Heart right ventricle (tissue), 16 donors: ENCODE measurements at regions of chr2 and their contacts with region 1.

Region 1: GRCh38 chr2:197889041-197889440 is 84.6 kb downstream of the PLCL1 start:
- DNase-seq: no peak
- ATAC-seq: peak in 2 of 8 donors; percentile 52 to 67
- H3K4me3 ChIP-seq: no peak overlapping the region
- H3K27ac ChIP-seq: peak overlapping the region in 7 of 10 donors; percentile 3 to 60 (median 29)
- H3K4me1 ChIP-seq: peaks cover 0 to 62% (median 31%) of the 10 kb centered on the region in 9 donors
- H3K27me3 ChIP-seq: no peaks in the 10 kb centered on the region
- CTCF ChIP-seq: no peak

Region 2: DNA sequence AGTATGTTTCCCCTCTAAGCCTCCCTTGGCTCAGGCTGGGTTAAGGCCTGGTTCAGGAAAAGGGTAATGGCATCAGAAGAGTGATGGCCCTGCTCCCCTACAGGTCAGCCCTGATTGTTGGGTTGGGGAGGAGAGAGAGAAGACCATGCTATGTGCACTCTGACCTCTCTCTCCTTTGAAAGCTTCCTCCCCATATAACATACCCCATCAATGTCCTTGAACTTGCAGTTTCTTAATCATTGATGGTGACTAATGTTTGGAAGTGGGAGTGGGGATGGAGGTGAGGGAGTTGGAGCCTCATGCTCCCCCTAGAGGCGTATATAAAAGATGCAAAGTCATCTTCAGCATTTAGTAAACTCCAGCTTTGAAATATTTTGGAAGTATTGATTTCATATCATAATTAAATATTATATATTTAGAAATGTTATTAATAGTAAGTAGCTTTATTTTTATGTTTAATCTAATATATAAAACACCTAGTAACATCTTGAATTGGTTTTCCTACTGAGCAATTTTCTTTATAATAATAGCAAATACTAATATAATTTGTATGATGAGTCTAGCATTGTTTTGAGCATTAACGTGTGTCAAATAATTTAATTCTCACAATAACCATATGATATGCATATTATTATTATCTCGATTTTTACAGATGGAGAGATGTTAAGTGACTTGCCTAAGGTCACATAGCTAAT is 75.8 kb before region 1 on chr2:
- intact Hi-C with region 1: loop called in 3 of 10 experiments (anchors 5 to 10 kb)
- DNase-seq: no peak
- ATAC-seq: peak in 2 of 8 donors; percentile 40 to 55
- H3K4me3 ChIP-seq: no peak overlapping the region
- H3K27ac ChIP-seq: no peak overlapping the region
- H3K4me1 ChIP-seq: peaks cover 0 to 33% (median 5%) of the 10 kb centered on the region in 9 donors
- H3K27me3 ChIP-seq: no peaks in the 10 kb centered on the region
- CTCF ChIP-seq: peak; percentile 29 to 61 (median 52)

Region 3: GRCh38 chr2:197958592-197959150 is 69.6 kb after region 1 on chr2:
- intact Hi-C with region 1: no loop called
- DNase-seq: no peak
- ATAC-seq: peak; percentile 74 to 96 (median 91)
- H3K4me3 ChIP-seq: no peak overlapping the region
- H3K27ac ChIP-seq: peak overlapping the region in 7 of 10 donors; percentile 9 to 63 (median 53)
- H3K4me1 ChIP-seq: peaks cover 0 to 55% (median 22%) of the 10 kb centered on the region in 9 donors
- H3K27me3 ChIP-seq: no peaks in the 10 kb centered on the region
- CTCF ChIP-seq: no peak

Region 4: GRCh38 chr2:197969391-197969893 is 80.4 kb after region 1 on chr2:
- intact Hi-C with region 1: no loop called
- DNase-seq: no peak
- ATAC-seq: peak; percentile 47 to 91 (median 76)
- H3K4me3 ChIP-seq: no peak overlapping the region
- H3K27ac ChIP-seq: no peak overlapping the region
- H3K4me1 ChIP-seq: peaks cover 0 to 54% (median 17%) of the 10 kb centered on the region in 9 donors
- H3K27me3 ChIP-seq: no peaks in the 10 kb centered on the region
- CTCF ChIP-seq: no peak